ENCODE measurements at regions of chr1 and their contacts with region 1.

Region 1: DNA sequence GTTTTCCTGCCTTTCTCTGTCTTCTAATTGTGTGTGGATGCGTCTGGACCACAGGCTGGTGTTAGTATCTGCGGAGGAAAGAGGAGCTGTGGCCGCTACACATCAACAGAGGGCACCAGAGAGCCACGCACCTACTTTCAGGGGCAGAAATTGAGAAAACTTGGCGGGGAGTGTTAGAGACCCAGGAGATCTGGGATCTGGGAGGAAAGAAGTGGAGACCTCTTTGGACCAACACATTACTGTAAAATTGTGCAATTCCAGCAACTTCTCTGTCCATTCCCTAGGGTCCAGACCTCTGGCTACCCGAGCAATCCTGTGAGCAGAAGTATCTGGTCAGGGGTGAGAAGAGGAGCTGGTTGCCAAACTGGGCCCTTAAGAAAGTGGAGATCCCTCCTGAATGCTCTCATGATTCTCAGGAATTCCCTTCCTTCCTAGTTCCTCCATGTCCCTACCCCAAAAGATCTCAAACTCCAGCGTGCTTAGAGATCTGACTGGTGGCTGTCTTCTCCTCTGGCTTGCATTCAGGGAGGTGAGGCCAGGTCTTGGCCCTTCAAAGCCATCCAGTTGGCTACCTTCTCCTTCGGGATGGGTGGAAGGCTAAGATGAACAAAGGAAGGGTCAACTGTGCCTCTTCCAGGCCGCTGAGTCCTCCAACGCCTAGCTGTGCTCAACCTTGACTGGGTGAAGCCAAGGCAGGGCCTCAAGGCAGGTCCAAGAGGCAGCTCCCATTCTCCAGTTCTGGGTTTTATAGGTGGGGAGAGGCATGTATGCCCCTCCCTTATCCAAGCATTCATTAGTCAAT is 1.2 kb upstream of the KIRREL1 start:
- DNase-seq: peak in 1 of 2 experiments; percentile 86
- H3K4me3 ChIP-seq: peak overlapping the region in 1 of 4 experiments; percentile 99; a peak in 1 of 8 replicates
- H3K27ac ChIP-seq: no peak overlapping the region
- H3K4me1 ChIP-seq: peaks cover 16 to 32% (median 22%) of the 10 kb centered on the region in 4 experiments
- H3K27me3 ChIP-seq: peaks cover 0 to 5% (median 0%) of the 10 kb centered on the region in 4 experiments; a peak in 3 of 7 replicates
- CTCF ChIP-seq: peak; percentile 90 to 97 (median 95)
- EP300 ChIP-seq: no peak
- POLR2A ChIP-seq: no peak
- RAD21 ChIP-seq: peak; percentile 96 to 98

Region 2: DNA sequence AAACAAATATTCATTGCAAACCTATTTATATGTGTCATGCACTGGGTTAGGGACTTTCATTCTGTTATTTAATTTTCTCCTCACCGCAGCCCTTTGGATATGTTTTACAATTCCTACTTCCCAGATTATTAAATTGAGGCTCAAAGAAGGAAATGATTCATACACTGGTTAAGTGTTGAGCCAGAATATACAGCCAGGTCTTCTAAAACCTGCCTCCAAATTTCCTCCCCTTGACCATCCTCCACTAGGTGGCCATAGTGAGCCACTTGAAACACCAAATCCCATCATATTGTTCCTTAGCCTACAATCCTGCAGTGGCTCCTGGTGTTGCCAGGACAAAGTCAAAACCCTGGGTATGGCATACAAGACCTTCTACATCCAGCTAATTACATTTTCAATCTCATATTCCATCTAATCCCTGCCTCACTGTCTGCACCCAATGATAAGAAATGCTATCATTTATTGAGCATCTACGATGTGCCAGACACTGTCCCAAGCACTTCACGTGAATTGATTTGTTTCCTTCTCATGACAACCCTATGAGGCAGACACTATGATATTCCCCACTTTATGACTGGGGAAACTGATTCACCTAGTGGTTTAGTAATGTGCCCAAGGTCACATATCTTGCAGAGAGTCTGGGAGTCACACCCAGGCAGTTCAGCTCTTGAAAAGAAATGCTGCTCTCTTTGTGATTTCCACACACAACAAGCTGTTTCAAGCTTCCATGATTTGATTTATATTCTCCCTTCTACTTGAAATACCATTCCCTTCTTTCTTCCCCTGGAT is 22.3 kb before region 1 on chr1:
- CTCF ChIA-PET with region 1: interaction called, 656 read pairs
- POLR2A ChIA-PET with region 1: interaction called, 6 read pairs
- DNase-seq: peak in 1 of 2 experiments; percentile 72
- H3K4me3 ChIP-seq: no peak overlapping the region
- H3K27ac ChIP-seq: no peak overlapping the region
- H3K4me1 ChIP-seq: peaks cover 0 to 8% (median 0%) of the 10 kb centered on the region in 4 experiments; a peak in 1 of 7 replicates
- H3K27me3 ChIP-seq: no peaks in the 10 kb centered on the region
- CTCF ChIP-seq: peak; percentile 31 to 96 (median 89)
- EP300 ChIP-seq: no peak
- POLR2A ChIP-seq: no peak
- RAD21 ChIP-seq: peak; percentile 87 to 90

Region 3: GRCh38 chr1:158019171-158019868 is 27.1 kb after region 1 on chr1:
- CTCF ChIA-PET with region 1: interaction called, 1,615 read pairs
- POLR2A ChIA-PET with region 1: interaction called, 94 read pairs
- DNase-seq: peak in 1 of 2 experiments; percentile 57
- H3K4me3 ChIP-seq: peak overlapping the region in 1 of 4 experiments; percentile 40; a peak in 1 of 8 replicates
- H3K27ac ChIP-seq: peak overlapping the region; percentile 74
- H3K4me1 ChIP-seq: peaks cover 15 to 47% (median 23%) of the 10 kb centered on the region in 4 experiments
- H3K27me3 ChIP-seq: no peaks in the 10 kb centered on the region
- CTCF ChIP-seq: no peak
- EP300 ChIP-seq: 0 out of 3 replicates have a peak, but pooled peaks of 1 of the 2 experiments have one; percentile 22
- POLR2A ChIP-seq: peak; percentile 40 to 71
- RAD21 ChIP-seq: no peak

Region 4: GRCh38 chr1:158055854-158056253 is 63.6 kb after region 1 on chr1:
- CTCF ChIA-PET with region 1: interaction called, 75 read pairs
- POLR2A ChIA-PET with region 1: no interaction called
- DNase-seq: no peak
- H3K4me3 ChIP-seq: no peak overlapping the region
- H3K27ac ChIP-seq: no peak overlapping the region
- H3K4me1 ChIP-seq: peaks cover 1 to 24% (median 12%) of the 10 kb centered on the region in 4 experiments
- H3K27me3 ChIP-seq: no peaks in the 10 kb centered on the region
- CTCF ChIP-seq: no peak
- EP300 ChIP-seq: no peak
- POLR2A ChIP-seq: no peak
- RAD21 ChIP-seq: no peak

Region 5: GRCh38 chr1:158075078-158075477 is 82.8 kb after region 1 on chr1:
- CTCF ChIA-PET with region 1: interaction called, 97 read pairs
- POLR2A ChIA-PET with region 1: interaction called, 8 read pairs
- DNase-seq: no peak
- H3K4me3 ChIP-seq: no peak overlapping the region
- H3K27ac ChIP-seq: no peak overlapping the region
- H3K4me1 ChIP-seq: peaks cover 0 to 38% (median 25%) of the 10 kb centered on the region in 4 experiments; a peak in 6 of 7 replicates
- H3K27me3 ChIP-seq: no peaks in the 10 kb centered on the region
- CTCF ChIP-seq: no peak
- EP300 ChIP-seq: no peak
- POLR2A ChIP-seq: no peak
- RAD21 ChIP-seq: no peak

Region 6: GRCh38 chr1:158227904-158228623 is 235.8 kb after region 1 on chr1:
- CTCF ChIA-PET with region 1: no interaction called
- POLR2A ChIA-PET with region 1: no interaction called
- DNase-seq: no peak
- H3K4me3 ChIP-seq: no peak overlapping the region
- H3K27ac ChIP-seq: no peak overlapping the region
- H3K4me1 ChIP-seq: no peaks in the 10 kb centered on the region
- H3K27me3 ChIP-seq: no peaks in the 10 kb centered on the region
- CTCF ChIP-seq: no peak
- EP300 ChIP-seq: no peak
- POLR2A ChIP-seq: no peak
- RAD21 ChIP-seq: no peak